K562 (cell line): ENCODE measurements at regions of chr12 and their contacts with region 1.

Region 1: DNA sequence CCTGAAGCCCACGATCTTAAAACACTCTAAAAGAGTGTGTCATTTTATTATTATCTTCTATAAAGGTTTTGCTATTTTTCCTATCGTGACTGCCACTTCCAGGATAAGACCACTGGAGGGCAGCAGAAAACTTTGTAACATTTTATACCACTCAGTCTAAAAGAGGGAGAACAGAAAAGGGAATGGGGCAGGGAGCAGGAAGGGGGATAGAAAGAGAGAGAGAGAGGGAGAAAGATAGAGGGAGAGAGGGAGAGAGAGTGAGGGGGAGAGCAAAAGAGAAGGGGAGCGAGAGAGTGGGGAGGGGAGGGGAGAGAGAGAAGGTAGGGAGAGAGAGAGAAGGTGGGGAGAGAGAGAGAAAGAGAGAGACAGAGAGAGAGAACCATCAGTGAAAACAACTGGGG is 2.0 kb upstream of the ART4 start:
- DNase-seq: peak; percentile 21 to 58 (median 29)
- ATAC-seq: peak; percentile 74
- H3K4me3 ChIP-seq: no peak overlapping the region
- H3K27ac ChIP-seq: no peak overlapping the region
- H3K4me1 ChIP-seq: peaks cover 0 to 10% of the 10 kb centered on the region in 2 experiments; a peak in 2 of 5 replicates
- H3K27me3 ChIP-seq: no peaks in the 10 kb centered on the region
- CTCF ChIP-seq: peak; percentile 38 to 63 (median 44); a peak in 5 of 6 replicates
- EP300 ChIP-seq: no peak
- POLR2A ChIP-seq: no peak
- RAD21 ChIP-seq: peak; percentile 79

Region 2: GRCh38 chr12:14803011-14803829 is 42.1 kb before region 1 on chr12 and contains the starts of genes C12orf60 and WBP11:
- CTCF ChIA-PET with region 1: no interaction called
- POLR2A ChIA-PET with region 1: no interaction called
- in situ Hi-C with region 1: no loop called
- intact Hi-C with region 1: loop called (anchors 5 kb)
- DNase-seq: peak; percentile 67 to 94 (median 80)
- ATAC-seq: peak; percentile 99
- H3K4me3 ChIP-seq: peak within 1 kb of the TSS; percentile 90
- H3K27ac ChIP-seq: peak within 1 kb of the TSS; percentile 80
- H3K4me1 ChIP-seq: no peaks in the 10 kb centered on the region
- H3K27me3 ChIP-seq: no peaks in the 10 kb centered on the region
- CTCF ChIP-seq: no peak
- EP300 ChIP-seq: no peak
- POLR2A ChIP-seq: peak; percentile 86
- RAD21 ChIP-seq: no peak
- polyA plus RNA-seq, gene C12orf60: 3.7 to 4.4 TPM
- polyA plus RNA-seq, gene WBP11: 7.7 to 16.2 TPM

Region 3: DNA sequence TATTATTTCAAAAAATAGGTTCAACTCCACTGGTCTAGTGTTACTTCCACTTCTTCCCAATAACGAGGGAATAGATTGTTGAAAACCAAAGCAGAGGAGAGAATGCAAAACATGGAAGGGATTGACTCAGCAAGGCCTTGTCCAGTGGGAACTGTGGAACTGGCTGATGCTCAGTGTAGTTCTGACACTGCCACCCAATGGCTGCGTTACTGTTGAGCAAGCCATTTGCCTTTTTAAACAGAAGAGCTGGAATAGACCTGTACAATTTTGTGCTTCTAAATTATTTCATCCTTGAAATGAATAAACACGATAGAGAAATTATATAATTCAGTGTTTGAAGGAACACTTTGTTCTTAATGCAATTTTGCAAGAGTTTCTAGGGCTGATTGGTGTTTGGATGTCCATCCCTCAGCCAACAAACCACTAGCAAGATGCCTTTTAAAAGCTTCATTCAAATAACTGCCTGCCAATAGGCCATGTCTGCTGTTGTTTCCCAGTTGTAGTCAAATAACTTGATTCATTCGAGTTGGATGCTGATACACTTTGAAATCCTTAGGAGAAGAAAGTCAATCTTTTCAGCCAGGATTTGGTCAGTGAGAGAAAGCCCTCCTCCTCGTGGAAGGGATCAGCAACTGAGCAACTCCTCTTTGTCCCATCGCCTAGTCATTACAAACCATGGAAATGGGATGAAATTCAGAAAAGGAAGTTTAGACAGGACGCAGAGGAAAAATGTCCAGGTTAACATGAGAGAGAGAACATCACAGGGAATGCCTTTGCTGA is 47.6 kb after region 1 on chr12:
- CTCF ChIA-PET with region 1: no interaction called
- POLR2A ChIA-PET with region 1: no interaction called
- in situ Hi-C with region 1: no loop called
- intact Hi-C with region 1: loop called (anchors 5 kb)
- DNase-seq: peak in 1 of 4 experiments; percentile 21
- ATAC-seq: 0 out of 3 replicates have a peak, but pooled peaks have one; percentile 33
- H3K4me3 ChIP-seq: no peak overlapping the region
- H3K27ac ChIP-seq: no peak overlapping the region
- H3K4me1 ChIP-seq: no peaks in the 10 kb centered on the region; a peak in 1 of 5 replicates
- H3K27me3 ChIP-seq: peaks cover 0 to 3% of the 10 kb centered on the region in 2 experiments; a peak in 2 of 5 replicates
- CTCF ChIP-seq: peak in 1 of 3 experiments; percentile 36; a peak in 2 of 6 replicates
- EP300 ChIP-seq: no peak
- POLR2A ChIP-seq: no peak
- RAD21 ChIP-seq: peak; percentile 49 to 64

Region 4: DNA sequence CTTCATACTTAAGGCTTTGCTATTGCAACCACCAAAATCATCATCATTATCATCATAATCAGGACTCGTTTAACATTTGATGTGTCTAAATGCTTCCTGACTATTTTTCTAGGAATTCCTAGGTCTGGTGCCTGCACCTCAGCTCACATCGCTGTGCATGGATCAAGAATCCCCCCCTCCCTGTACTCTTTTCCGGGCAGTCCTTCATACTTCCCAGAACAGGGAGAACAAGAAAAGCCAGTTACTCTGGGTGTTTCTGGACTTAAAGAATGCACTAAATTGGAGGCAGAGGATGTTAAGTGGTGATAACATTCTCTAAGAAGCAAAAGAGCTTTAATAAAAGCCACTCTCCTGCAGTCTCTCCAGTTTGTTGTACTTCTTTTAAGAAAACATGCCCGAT is 83.6 kb after region 1 on chr12:
- CTCF ChIA-PET with region 1: no interaction called
- POLR2A ChIA-PET with region 1: no interaction called
- in situ Hi-C with region 1: no loop called
- intact Hi-C with region 1: loop called (anchors 10 kb)
- DNase-seq: no peak
- ATAC-seq: no peak
- H3K4me3 ChIP-seq: no peak overlapping the region
- H3K27ac ChIP-seq: no peak overlapping the region
- H3K4me1 ChIP-seq: no peaks in the 10 kb centered on the region
- H3K27me3 ChIP-seq: no peaks in the 10 kb centered on the region
- CTCF ChIP-seq: no peak
- EP300 ChIP-seq: no peak
- POLR2A ChIP-seq: no peak
- RAD21 ChIP-seq: no peak

Region 5: GRCh38 chr12:15011162-15011561 is 165.8 kb after region 1 on chr12:
- CTCF ChIA-PET with region 1: no interaction called
- POLR2A ChIA-PET with region 1: no interaction called
- in situ Hi-C with region 1: no loop called
- intact Hi-C with region 1: no loop called
- DNase-seq: no peak
- ATAC-seq: peak; percentile 52; the same call in 1 of the 3 replicates
- H3K4me3 ChIP-seq: no peak overlapping the region
- H3K27ac ChIP-seq: no peak overlapping the region
- H3K4me1 ChIP-seq: no peaks in the 10 kb centered on the region
- H3K27me3 ChIP-seq: no peaks in the 10 kb centered on the region
- CTCF ChIP-seq: no peak
- EP300 ChIP-seq: no peak
- POLR2A ChIP-seq: no peak
- RAD21 ChIP-seq: 0 out of 4 replicates have a peak, but pooled peaks of 1 of the 2 experiments have one; percentile 6